Pancreas (tissue), 10 donors: ENCODE measurements at regions of chr12 and their contacts with region 1.

Region 1: GRCh38 chr12:9707864-9708808 is 24.8 kb downstream of the CLECL1 start:
- DNase-seq: peak in 4 of 6 donors; percentile 18 to 49 (median 34)
- ATAC-seq: peak; percentile 46 to 91 (median 86)
- H3K4me3 ChIP-seq: no peak overlapping the region
- H3K27ac ChIP-seq: no peak overlapping the region
- H3K4me1 ChIP-seq: no peaks in the 10 kb centered on the region
- H3K27me3 ChIP-seq: no peaks in the 10 kb centered on the region
- CTCF ChIP-seq: peak; percentile 50 to 72 (median 69)

Region 2: DNA sequence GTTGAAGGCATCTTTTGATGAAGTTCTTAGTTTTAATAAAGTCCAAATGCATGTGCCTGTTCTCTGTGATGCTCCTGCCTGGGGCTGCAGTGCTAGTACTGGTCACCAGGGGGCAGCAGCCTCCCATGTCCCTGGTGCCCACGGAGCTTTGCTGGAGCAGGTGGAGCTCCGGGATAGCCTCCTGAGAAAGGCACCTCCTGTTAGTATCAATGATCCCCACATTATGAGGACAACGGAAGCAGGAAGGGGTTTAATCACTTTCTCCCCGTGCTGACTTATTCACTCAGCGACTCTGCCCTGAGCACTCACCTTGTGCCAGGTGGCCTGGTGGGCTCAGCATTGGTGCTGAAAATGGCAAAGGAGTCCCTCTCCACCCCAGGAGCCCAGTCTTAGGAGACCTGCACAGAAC is 376.9 kb before region 1 on chr12:
- intact Hi-C with region 1: loop called in 2 of 3 experiments (anchors 5 to 10 kb)
- DNase-seq: peak; percentile 33 to 89 (median 74)
- ATAC-seq: peak; percentile 80 to 100 (median 96)
- H3K4me3 ChIP-seq: no peak overlapping the region
- H3K27ac ChIP-seq: no peak overlapping the region
- H3K4me1 ChIP-seq: no peaks in the 10 kb centered on the region
- H3K27me3 ChIP-seq: no peaks in the 10 kb centered on the region
- CTCF ChIP-seq: peak; percentile 88 to 97 (median 94)

Region 3: DNA sequence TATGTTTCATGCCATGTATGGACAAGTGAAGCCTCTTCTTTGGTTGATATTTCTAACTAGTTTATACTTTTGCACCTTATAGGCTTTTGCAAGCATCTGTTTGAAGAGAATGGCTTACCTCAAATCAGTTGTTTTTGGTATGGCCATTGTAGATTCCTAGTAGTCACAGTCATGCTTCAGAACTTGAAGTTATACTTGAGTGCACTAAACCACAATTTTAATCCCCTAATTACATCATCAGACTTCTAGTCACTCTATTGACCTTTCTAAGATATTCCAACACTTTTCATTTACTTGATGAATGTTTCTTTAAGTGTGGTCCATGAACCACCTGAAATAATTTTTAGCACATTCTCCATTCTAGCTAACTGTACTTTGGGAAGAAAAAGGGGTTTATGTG is 81.8 kb before region 1 on chr12:
- intact Hi-C with region 1: no loop called
- DNase-seq: no peak
- ATAC-seq: no peak
- H3K4me3 ChIP-seq: no peak overlapping the region
- H3K27ac ChIP-seq: no peak overlapping the region
- H3K4me1 ChIP-seq: no peaks in the 10 kb centered on the region
- H3K27me3 ChIP-seq: no peaks in the 10 kb centered on the region
- CTCF ChIP-seq: no peak

Region 4: DNA sequence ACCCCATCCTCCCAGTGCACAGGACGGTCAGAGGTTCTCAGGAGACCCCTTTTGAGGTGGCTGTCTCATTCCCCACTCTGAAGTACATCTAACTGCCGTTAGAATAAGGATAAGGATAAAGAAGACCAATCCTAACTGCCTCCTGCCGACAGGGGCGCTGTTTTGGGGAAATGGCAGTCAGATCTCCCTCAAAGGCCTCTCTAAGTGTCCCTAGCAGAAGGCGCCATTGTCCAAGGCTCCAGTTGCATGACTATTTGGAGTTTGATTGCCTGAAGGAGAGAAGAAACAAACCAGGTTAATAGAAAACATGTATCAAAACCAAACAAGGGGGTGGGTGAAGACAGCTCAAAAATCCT is 71.3 kb before region 1 on chr12:
- intact Hi-C with region 1: loop called in 1 of 3 experiments (anchors 5 kb)
- DNase-seq: no peak
- ATAC-seq: no peak
- H3K4me3 ChIP-seq: no peak overlapping the region
- H3K27ac ChIP-seq: no peak overlapping the region
- H3K4me1 ChIP-seq: no peaks in the 10 kb centered on the region
- H3K27me3 ChIP-seq: no peaks in the 10 kb centered on the region
- CTCF ChIP-seq: no peak